Adrenal gland (tissue), 19 donors: ENCODE measurements at regions of chr6 and their contacts with region 1.

Region 1: DNA sequence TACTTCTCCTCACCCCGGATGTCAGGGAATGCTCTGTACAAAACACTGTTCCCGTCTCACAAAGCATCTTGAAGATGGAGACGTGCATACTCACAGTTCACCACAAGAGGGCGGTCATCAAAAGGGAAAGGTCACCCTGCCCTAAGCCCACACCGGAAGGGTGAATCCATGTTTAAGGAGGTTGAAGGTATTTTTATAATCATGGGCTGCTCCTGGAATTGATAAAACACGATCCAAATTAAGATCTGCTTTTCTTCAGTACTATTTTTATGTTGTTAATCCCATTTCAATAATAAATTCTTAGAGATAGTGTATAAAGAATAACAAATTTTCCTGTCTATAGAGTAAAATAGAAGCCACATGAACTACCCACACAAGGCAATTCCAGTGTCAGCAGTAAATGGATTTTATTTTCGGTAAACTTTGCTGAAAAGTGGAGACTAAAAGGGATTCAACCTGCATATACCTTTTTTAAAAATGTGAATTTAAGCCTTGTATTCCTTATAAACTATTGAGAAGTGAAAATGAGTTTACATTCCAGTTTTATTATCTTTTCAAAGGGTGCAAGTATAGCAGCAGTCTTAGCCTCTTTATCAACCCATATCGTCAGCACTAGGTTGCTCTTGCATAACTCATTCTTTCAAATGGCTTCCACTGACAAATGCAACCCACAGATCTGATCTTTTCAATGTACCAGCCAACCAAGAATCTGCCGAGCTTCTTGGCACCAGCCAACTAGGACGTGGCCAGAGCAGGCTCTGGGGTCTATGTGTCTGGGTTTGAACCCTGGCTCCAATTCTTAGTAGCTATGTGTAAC is 79.7 kb upstream of the MBOAT1 start:
- DNase-seq: peak; percentile 61 to 90 (median 82)
- H3K4me3 ChIP-seq: no peak overlapping the region
- H3K27ac ChIP-seq: no peak overlapping the region
- H3K4me1 ChIP-seq: no peaks in the 10 kb centered on the region
- H3K27me3 ChIP-seq: no peaks in the 10 kb centered on the region
- CTCF ChIP-seq: peak; percentile 83 to 92 (median 90)
- POLR2A ChIP-seq: no peak

Region 2: GRCh38 chr6:20092071-20092566 is 199.9 kb before region 1 on chr6:
- intact Hi-C with region 1: loop called in 1 of 2 experiments (anchors 10 kb)
- DNase-seq: peak in 1 of 7 donors; percentile 4
- H3K4me3 ChIP-seq: no peak overlapping the region
- H3K27ac ChIP-seq: no peak overlapping the region
- H3K4me1 ChIP-seq: no peaks in the 10 kb centered on the region
- H3K27me3 ChIP-seq: no peaks in the 10 kb centered on the region
- CTCF ChIP-seq: peak; percentile 65 to 79 (median 74)
- POLR2A ChIP-seq: no peak

Region 3: GRCh38 chr6:20109526-20109925 is 182.4 kb before region 1 on chr6:
- intact Hi-C with region 1: no loop called
- DNase-seq: no peak
- H3K4me3 ChIP-seq: no peak overlapping the region
- H3K27ac ChIP-seq: no peak overlapping the region
- H3K4me1 ChIP-seq: no peaks in the 10 kb centered on the region
- H3K27me3 ChIP-seq: no peaks in the 10 kb centered on the region
- CTCF ChIP-seq: no peak
- POLR2A ChIP-seq: no peak

Region 4: DNA sequence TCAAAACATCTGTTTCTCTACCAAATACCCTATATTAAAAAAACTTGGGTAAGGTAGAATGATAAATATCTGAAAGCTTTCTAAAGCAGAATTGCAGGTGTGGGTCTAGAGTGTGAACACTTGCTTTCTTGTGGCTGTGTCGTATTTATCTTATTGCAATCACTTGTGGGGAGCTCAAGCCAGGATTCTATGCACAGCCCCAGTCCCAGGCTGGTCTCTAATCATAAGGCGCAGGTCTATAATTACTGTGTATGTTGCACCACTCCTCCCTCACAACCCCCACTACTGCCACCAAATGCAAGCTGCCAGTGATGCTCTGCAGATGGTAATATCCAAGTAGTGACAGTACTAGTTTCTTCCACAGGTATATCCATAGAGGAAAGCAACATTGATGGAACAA is 107.5 kb after region 1 on chr6:
- intact Hi-C with region 1: loop called in 1 of 2 experiments (anchors 5 kb)
- DNase-seq: no peak
- H3K4me3 ChIP-seq: no peak overlapping the region
- H3K27ac ChIP-seq: no peak overlapping the region
- H3K4me1 ChIP-seq: no peaks in the 10 kb centered on the region
- H3K27me3 ChIP-seq: no peaks in the 10 kb centered on the region
- CTCF ChIP-seq: no peak
- POLR2A ChIP-seq: no peak